Activated CD8-positive, alpha-beta T cell treated with anti-CD3 and anti-CD28 coated beads, Interleukin-2, amount 10 ng/mL, durations not matched to agents 7 days and 5 days (primary cell): ENCODE measurements at regions of chr5 and their contacts with region 1.

Region 1: GRCh38 chr5:151213800-151214613 is 9.9 kb downstream of the CCDC69 start:
- DNase-seq: peak; percentile 95
- ATAC-seq: peak; percentile 88
- H3K4me3 Mint-ChIP-seq: peak overlapping the region; percentile 87
- H3K27ac Mint-ChIP-seq: peak overlapping the region; percentile 97
- H3K4me1 Mint-ChIP-seq: peaks cover 82% of the 10 kb centered on the region
- H3K27me3 Mint-ChIP-seq: no peaks in the 10 kb centered on the region

Region 2: DNA sequence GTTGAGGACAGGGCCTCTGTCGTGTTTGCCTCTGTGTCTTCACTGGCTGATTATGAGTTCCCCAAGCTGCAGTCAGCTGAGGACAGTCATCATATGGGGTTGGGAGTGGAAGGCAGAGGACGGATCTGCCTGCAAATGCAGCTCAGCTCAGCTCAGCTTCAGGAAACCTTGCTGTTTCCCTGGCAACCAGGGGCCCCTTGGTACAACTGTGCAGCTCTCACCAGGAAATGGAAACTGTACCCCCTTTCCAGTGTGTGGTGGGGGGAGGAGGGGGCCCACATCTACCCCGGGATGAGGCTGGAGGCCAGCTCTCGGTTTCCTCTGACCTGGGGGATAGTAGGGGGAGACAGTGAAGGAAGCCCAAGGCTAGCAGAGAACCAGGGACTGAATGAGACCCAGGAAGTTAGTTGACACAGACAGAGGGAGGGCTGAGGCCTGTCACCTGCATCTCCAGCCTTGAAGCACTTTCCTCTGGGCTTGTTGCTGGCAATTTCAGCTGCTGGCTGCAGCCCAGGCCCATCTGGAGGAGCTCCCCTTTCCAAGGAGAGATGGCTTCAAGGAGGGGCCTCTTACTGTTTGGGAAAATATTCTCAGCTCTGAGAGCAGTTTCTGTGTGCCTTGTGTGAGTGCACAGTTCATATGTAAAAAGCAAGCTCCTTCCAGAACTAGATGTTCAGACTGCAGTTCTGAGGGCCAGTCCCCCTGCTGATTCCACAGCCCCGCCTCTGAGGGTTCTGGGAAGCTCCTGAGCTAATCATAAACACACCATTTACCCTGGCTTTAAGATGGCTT is 63.3 kb before region 1 on chr5:
- CTCF ChIA-PET with region 1: interaction called, 3 read pairs
- POLR2A ChIA-PET with region 1: interaction called, 45 read pairs
- DNase-seq: peak; percentile 86
- ATAC-seq: peak; percentile 84
- H3K4me3 Mint-ChIP-seq: peak overlapping the region; percentile 64
- H3K27ac Mint-ChIP-seq: peak overlapping the region; percentile 92
- H3K4me1 Mint-ChIP-seq: peaks cover 93% of the 10 kb centered on the region
- H3K27me3 Mint-ChIP-seq: no peaks in the 10 kb centered on the region

Region 3: DNA sequence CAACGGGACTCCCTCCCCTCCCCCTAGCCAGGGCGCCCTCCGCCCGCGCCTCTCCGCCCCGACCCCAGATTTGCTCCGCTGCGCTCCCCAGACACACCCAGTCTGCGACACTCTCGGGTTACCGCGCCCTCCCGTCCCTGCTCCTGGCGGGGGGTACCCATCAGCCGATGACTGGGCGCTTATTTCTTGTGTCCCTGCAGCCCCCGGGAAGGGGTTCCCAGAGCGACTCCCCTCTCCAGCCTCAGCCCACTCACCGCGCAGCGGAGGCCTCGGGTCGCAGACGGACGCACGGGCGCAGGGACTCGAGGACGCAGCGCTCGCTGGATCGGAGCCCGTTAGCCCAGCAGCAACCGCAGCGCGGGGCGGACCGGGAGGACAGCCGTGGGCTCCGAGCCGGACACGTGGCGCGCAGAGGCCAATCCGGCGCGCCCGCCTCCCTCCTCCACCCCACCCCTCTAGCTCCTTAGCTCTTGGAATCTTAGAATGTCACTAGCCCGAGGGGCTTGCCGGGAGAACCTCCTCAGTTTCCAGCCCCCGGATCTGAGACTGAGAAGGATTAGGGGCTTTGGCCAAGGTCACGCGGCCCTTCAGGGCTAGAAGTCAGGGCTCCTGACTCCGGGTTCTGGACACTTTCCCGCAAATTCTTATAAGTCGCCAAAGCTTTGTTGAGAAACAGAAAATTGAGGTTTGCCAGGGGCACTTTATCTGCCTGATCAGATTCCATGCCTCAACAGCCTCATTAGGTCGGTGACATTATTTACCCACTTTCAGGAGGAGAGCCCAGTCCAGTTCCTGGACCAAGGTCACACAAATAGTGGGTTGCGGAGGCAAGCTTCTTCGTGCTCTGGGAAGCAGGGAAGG is 56.4 kb before region 1 on chr5 and contains the start of gene ANXA6:
- CTCF ChIA-PET with region 1: interaction called, 6 read pairs
- POLR2A ChIA-PET with region 1: interaction called, 45 read pairs
- DNase-seq: peak; percentile 76
- ATAC-seq: peak; percentile 81
- H3K4me3 Mint-ChIP-seq: peak within 1 kb of the TSS; percentile 95
- H3K27ac Mint-ChIP-seq: peak within 1 kb of the TSS; percentile 89
- H3K4me1 Mint-ChIP-seq: peaks cover 47% of the 10 kb centered on the region
- H3K27me3 Mint-ChIP-seq: peaks cover 4% of the 10 kb centered on the region
- total RNA-seq, gene ANXA6: 481 to 495 TPM

Region 4: DNA sequence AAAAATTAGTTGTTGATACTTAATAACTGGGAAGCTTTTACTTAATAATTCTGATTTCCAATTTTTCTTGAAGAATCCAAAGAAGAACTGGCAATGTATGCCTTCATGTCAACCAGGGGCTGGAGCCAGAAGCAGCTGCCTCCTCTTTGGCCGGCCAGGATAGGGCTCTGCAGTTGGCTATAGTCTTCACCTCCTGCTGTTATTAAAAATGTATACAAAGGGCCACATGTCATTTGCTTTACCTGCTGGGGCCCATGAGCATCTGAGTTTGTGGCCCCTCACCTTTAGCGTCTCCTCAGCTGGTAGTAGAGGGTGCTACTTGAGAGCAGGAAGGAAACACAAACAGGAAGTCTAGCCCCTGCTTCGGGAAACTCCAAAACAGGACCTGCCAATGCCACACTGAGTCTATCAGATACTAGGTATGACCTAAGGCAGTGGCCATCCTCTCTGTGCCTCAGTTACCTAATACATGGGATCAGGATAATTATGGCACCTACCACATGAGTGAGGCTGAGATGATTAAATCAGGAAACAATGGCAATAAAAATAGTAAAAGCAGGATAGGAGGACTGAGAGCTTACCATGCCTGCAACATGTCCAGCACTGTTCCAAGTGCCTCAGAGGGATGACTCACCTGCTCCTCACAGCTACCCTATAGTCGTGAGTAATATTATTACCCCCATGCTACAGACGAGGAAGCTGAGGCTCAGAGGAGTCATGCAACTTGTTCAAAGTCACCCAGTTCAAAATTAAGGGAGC is 11.4 kb before region 1 on chr5:
- CTCF ChIA-PET with region 1: interaction called, 7 read pairs
- POLR2A ChIA-PET with region 1: interaction called, 22 read pairs
- DNase-seq: no peak
- ATAC-seq: peak; percentile 84
- H3K4me3 Mint-ChIP-seq: peak overlapping the region; percentile 22
- H3K27ac Mint-ChIP-seq: peak overlapping the region; percentile 75
- H3K4me1 Mint-ChIP-seq: peaks cover 34% of the 10 kb centered on the region
- H3K27me3 Mint-ChIP-seq: no peaks in the 10 kb centered on the region

Region 5: GRCh38 chr5:151239237-151239861 is 25.3 kb after region 1 on chr5:
- CTCF ChIA-PET with region 1: interaction called, 133 read pairs
- POLR2A ChIA-PET with region 1: interaction called, 8 read pairs
- DNase-seq: peak; percentile 72
- ATAC-seq: peak; percentile 70
- H3K4me3 Mint-ChIP-seq: no peak overlapping the region
- H3K27ac Mint-ChIP-seq: no peak overlapping the region
- H3K4me1 Mint-ChIP-seq: peaks cover 46% of the 10 kb centered on the region
- H3K27me3 Mint-ChIP-seq: no peaks in the 10 kb centered on the region

Region 6: DNA sequence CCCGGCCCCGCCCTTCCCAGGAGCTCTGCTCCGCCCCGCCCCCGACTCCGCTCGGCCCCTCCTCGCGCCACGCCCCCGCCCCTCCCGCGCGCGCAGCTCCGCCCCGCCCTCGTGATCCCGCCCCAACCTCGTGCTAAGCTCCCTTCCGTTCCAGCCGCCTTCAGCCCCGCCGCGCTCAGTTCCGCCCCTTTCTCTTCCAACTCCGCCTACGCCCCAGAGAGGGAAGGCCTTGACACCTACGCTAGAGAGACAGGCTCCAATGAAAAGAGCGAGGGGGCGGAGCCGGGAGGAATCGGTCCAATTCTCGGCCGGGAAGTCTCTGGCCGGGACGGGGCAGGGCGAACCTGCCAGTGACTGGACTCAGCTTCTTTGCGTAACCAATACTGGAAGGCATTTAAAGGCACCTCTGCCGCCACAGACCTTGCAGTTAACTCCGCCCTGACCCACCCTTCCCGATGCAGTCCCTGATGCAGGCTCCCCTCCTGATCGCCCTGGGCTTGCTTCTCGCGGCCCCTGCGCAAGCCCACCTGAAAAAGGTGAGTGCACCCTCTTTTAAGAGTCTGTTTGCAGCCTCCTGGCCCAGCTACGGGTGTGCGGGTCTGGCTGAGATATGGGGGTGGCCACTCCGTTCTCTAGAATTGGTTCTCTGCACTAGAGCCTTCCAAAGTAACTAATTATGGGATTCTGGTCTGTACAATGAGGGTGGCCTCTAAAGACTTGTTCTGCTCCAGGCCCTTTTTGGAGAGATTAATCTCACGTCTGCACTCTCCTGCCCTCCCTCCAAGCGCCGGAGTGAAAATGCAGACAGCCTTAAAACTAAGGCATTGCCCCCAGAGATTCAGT is 39.0 kb after region 1 on chr5 and contains the start of gene GM2A:
- CTCF ChIA-PET with region 1: interaction called, 4 read pairs
- POLR2A ChIA-PET with region 1: interaction called, 11 read pairs
- DNase-seq: peak; percentile 99
- ATAC-seq: peak; percentile 98
- H3K4me3 Mint-ChIP-seq: peak within 1 kb of the TSS; percentile 88
- H3K27ac Mint-ChIP-seq: peak within 1 kb of the TSS; percentile 93
- H3K4me1 Mint-ChIP-seq: peaks cover 39% of the 10 kb centered on the region
- H3K27me3 Mint-ChIP-seq: no peaks in the 10 kb centered on the region
- total RNA-seq, gene GM2A: 19.5 to 19.6 TPM

Region 7: GRCh38 chr5:151347364-151347763 is 133.4 kb after region 1 on chr5 and contains the start of gene SLC36A2:
- CTCF ChIA-PET with region 1: no interaction called
- POLR2A ChIA-PET with region 1: no interaction called
- DNase-seq: no peak
- ATAC-seq: no peak
- H3K4me3 Mint-ChIP-seq: no peak within 1 kb of the TSS
- H3K27ac Mint-ChIP-seq: no peak within 1 kb of the TSS
- H3K4me1 Mint-ChIP-seq: no peaks in the 10 kb centered on the region
- H3K27me3 Mint-ChIP-seq: peaks cover 27% of the 10 kb centered on the region
- total RNA-seq, gene SLC36A2: not detected